ENCODE measurements at regions of chr3 and their contacts with region 1.

Region 1: GRCh38 chr3:122305818-122306621 is 19.0 kb upstream of the CSTA start:
- DNase-seq: no peak
- H3K4me3 ChIP-seq: no peak overlapping the region
- CTCF ChIP-seq: no peak
- POLR2A ChIP-seq: no peak

Region 2: DNA sequence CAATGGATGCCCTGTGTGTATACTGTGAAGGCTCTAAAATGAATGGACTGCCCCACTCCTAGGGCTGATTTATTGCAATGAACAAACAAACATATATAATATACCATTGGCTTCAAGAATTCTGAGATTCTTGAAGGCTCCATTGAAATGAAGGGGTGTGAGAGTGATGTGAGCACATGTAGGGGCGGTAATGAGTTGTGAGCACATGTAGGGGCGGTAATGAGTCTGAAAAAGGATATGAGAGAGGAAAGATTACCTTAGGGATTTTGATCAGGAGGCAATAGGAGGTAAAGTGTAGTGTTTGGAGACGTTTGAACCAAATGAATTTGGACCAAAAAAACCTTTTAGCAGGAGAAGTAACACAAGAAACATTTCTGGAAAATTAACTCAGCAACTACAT is 81.7 kb after region 1 on chr3:
- intact Hi-C with region 1: loop called (anchors 5 kb)
- DNase-seq: no peak
- H3K4me3 ChIP-seq: no peak overlapping the region
- CTCF ChIP-seq: no peak
- POLR2A ChIP-seq: no peak

Measured in lower leg skin (tissue), 4 donors.